Ascending aorta (tissue), 2 donors: ENCODE measurements at regions of chr1 and their contacts with region 1.

Region 1: GRCh38 chr1:35930593-35931445 is at the start of gene AGO3:
- DNase-seq: peak; percentile 21 to 88
- H3K4me3 ChIP-seq: peak within 1 kb of the TSS; percentile 86 to 90
- H3K27ac ChIP-seq: peak within 1 kb of the TSS; percentile 98 to 99
- H3K4me1 ChIP-seq: peaks cover 0 to 13% of the 10 kb centered on the region in 2 donors
- H3K27me3 ChIP-seq: no peaks in the 10 kb centered on the region
- CTCF ChIP-seq: no peak
- total RNA-seq, gene AGO3: 19.7 TPM

Region 2: GRCh38 chr1:35715568-35716002 is 215.2 kb before region 1 on chr1:
- intact Hi-C with region 1: loop called (anchors 5 kb)
- DNase-seq: peak; percentile 15 to 71
- H3K4me3 ChIP-seq: peak overlapping the region; percentile 5 to 42
- H3K27ac ChIP-seq: no peak overlapping the region
- H3K4me1 ChIP-seq: peaks cover 17 to 26% of the 10 kb centered on the region in 2 donors
- H3K27me3 ChIP-seq: no peaks in the 10 kb centered on the region
- CTCF ChIP-seq: peak; percentile 59 to 79 (median 68)

Region 3: DNA sequence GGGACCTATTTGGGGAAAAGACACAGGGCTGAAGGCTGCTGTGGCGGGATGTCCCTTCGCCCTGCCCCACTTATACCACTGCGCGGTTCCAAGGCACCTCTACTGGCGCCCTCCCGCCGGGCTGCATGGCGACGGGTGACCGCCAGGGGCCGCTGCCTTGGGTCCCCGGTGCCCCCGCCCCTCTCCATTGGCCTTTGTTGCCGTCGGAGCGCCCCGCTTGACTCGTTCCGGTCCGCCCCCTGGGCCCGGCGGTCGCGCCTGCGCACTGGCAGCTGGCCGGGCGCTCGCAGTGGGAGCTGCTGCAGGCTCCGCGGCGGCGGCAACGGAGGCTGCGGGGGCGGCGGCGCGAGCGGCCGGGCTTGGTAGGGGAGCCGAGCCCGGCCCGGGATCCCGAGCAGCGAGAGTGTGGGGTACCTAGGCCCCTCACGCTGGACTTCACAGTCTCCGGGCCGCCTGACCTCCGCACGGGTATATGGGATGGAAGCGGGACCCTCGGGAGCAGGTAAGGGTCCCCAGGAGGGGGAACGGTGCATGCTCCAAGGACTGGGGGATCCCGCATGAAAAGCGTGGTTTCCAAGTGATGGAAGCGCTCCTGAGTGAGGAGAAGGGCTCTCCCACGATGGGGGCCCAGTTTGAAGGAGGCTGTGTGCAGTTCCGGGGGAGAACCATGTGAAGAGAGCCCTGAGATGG is 47.7 kb before region 1 on chr1 and contains the start of gene AGO1:
- intact Hi-C with region 1: loop called (anchors 1 kb)
- DNase-seq: peak; percentile 77 to 96
- H3K4me3 ChIP-seq: peak within 1 kb of the TSS; percentile 81 to 90
- H3K27ac ChIP-seq: peak within 1 kb of the TSS; percentile 79 to 83
- H3K4me1 ChIP-seq: peaks cover 0 to 20% of the 10 kb centered on the region in 2 donors
- H3K27me3 ChIP-seq: no peaks in the 10 kb centered on the region
- CTCF ChIP-seq: peak; percentile 96
- total RNA-seq, gene AGO1: 24.2 TPM

Region 4: DNA sequence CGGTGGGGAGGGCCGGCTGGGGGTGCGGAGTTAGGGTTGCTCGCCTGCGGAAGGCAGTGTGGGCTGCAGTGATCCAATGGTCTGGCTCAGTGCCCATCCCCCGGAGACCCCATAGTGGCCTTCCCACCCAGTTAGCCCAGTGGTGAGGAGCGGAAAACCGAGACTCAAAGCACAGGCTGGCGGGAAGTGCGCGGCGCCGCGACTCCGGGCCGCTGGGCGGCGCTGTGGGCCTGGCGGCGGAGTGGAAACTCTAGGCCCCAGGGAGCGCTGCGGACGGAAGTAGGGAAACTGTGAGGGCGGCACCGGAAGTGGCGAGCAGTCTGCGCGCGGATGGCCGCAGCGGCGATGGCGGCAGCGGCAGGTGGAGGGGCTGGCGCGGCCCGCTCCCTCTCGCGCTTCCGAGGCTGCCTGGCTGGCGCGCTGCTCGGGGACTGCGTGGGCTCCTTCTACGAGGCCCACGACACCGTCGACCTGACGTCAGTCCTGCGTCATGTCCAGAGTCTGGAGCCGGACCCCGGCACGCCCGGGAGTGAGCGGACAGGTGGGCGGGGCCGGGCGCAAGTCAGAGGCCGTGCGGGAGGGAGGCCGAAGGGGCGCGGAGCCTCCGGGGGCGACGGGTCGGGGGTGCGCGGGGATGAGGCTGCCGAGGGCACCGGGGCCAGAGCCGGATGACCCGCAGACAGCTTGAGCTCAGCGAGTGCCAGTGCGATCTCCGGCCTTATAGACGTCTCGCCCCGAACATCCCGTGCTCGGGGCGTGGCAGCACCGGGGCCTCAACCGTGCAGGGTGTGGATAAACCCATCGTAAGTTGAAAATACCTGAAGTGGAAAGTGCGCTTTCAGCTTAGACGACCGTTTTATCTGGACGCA is 158.0 kb after region 1 on chr1 and contains the start of gene ADPRS:
- intact Hi-C with region 1: loop called (anchors 10 kb)
- DNase-seq: peak in 1 of 2 donors; percentile 92
- H3K4me3 ChIP-seq: peak within 1 kb of the TSS; percentile 62 to 88
- H3K27ac ChIP-seq: peak within 1 kb of the TSS; percentile 71 to 85
- H3K4me1 ChIP-seq: peaks cover 12 to 23% of the 10 kb centered on the region in 2 donors
- H3K27me3 ChIP-seq: no peaks in the 10 kb centered on the region
- CTCF ChIP-seq: peak; percentile 98 to 99 (median 99)
- total RNA-seq, gene ADPRS: 69.3 TPM

Region 5: GRCh38 chr1:37420456-37420855 is 1489.6 kb after region 1 on chr1:
- intact Hi-C with region 1: no loop called
- DNase-seq: no peak
- H3K4me3 ChIP-seq: no peak overlapping the region
- H3K27ac ChIP-seq: no peak overlapping the region
- H3K4me1 ChIP-seq: no peaks in the 10 kb centered on the region
- H3K27me3 ChIP-seq: no peaks in the 10 kb centered on the region
- CTCF ChIP-seq: no peak